Left cardiac atrium (tissue), 4 donors: ENCODE measurements at regions of chr1 and their contacts with region 1.

Region 1: DNA sequence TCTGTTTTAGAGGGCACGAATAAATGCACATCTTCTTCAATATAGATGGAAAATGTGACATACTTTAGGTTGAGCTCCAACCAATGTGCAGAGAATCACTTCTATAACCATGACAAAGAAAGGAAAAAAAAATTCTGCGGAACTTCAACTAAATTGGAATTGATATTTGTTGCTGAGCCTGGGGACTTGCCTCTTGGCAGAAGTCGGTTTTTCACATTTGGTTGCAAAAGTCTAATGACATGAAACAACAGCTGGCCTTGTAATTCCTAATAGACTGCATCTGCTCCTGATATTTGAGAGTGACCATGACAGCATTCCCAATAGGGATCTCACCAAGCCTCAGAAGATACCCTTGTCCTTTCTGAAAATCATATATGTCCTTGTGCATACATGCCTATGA is 112.8 kb downstream of the PRRX1 start:
- DNase-seq: no peak
- ATAC-seq: peak; percentile 36 to 50

Region 2: GRCh38 chr1:169933984-169934725 is 842.6 kb before region 1 on chr1:
- intact Hi-C with region 1: loop called in 1 of 2 experiments (anchors 10 kb)
- DNase-seq: no peak
- ATAC-seq: peak; percentile 27 to 54